RWPE1 (cell line): ENCODE measurements at regions of chr5 and their contacts with region 1.

Region 1: GRCh38 chr5:157253547-157253946 is 12.4 kb upstream of the CYFIP2 start:
- DNase-seq: peak; percentile 88
- H3K27ac ChIP-seq: no peak overlapping the region
- CTCF ChIP-seq: peak; percentile 76

Region 2: GRCh38 chr5:157312492-157312891 is 58.9 kb after region 1 on chr5:
- CTCF ChIA-PET with region 1: interaction called, 16 read pairs
- POLR2A ChIA-PET with region 1: no interaction called
- DNase-seq: peak; percentile 88
- H3K27ac ChIP-seq: no peak overlapping the region
- CTCF ChIP-seq: peak; percentile 77

Region 3: GRCh38 chr5:157502143-157502647 is 248.6 kb after region 1 on chr5:
- CTCF ChIA-PET with region 1: no interaction called
- POLR2A ChIA-PET with region 1: no interaction called
- DNase-seq: no peak
- H3K27ac ChIP-seq: no peak overlapping the region
- CTCF ChIP-seq: no peak